Heart right ventricle (tissue), 16 donors: ENCODE measurements at regions of chr10 and their contacts with region 1.

Region 1: DNA sequence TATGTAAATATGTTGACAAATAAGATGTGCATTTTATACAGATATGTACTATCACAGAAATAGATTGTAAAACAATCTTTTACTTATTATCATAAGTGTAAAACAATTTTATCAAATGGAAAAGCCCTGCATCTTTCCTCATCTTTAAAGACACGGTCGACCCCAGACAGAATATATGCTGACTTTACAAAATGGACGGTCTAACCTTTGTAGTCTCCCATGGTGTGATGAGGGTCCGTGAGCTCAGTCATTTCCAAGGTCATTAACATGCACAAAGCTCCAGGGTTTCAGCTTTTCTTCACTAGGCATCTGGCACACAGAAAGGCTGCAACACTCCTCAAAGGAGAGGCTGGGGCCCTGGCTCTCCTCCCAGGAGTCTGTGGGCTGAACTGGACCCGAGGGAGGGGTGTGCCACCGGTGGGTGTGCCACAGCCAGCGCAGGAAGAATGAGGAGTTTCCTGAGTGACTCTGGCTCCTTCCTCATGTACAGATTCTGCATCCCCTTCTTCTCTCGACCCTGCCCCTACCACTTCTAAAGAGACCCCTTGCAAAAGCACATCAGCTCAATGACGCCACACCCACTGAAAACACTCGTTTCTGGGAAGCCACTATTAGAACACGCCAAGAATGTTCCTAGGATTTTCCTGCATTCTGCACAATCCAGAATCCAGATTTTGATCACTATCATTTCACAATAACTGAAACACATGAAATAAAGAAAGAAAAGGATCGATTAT is 26.2 kb upstream of the ABLIM1 start:
- DNase-seq: peak; percentile 49 to 63
- ATAC-seq: peak; percentile 54 to 79 (median 66)
- H3K4me3 ChIP-seq: peak overlapping the region; percentile 15 to 62 (median 54)
- H3K27ac ChIP-seq: peak overlapping the region; percentile 75 to 95 (median 87)
- H3K4me1 ChIP-seq: peaks cover 19 to 92% (median 60%) of the 10 kb centered on the region in 9 donors
- H3K27me3 ChIP-seq: no peaks in the 10 kb centered on the region
- CTCF ChIP-seq: no peak

Region 2: GRCh38 chr10:114603948-114604347 is 80.3 kb before region 1 on chr10:
- intact Hi-C with region 1: loop called in 1 of 10 experiments (anchors 2 kb)
- DNase-seq: no peak
- ATAC-seq: peak; percentile 36 to 84 (median 74)
- H3K4me3 ChIP-seq: no peak overlapping the region
- H3K27ac ChIP-seq: peak overlapping the region; percentile 37 to 87 (median 64)
- H3K4me1 ChIP-seq: peaks cover 18 to 90% (median 70%) of the 10 kb centered on the region in 9 donors
- H3K27me3 ChIP-seq: no peaks in the 10 kb centered on the region
- CTCF ChIP-seq: no peak

Region 3: DNA sequence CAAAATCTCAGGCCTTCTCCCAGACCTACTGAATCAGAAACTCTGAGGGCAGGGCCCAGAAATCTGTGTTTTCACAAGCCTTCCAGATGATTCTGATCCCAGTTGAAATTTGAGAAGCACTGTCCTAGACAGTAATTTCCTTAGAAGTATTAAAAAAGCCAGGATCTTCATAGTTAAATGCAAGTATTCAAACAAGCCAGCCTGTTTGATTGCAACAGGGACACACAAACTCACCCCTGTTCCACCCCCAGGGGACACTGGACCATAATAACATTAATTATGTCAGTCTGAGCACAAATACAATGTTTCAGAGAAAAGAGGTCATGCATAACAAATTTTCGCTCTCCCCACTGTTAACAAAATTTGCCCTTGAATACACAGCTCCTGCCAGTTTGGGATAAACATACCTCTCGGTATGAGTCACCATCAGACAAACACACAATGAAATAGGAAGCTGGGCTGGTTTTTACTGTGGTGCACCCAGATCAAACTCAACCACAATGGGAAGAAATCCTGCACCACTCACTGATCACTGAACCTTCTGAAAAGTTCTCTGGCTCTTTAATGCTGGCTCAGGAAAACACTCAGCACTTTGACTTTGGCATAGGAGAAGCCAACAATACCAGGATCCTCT is 60.5 kb before region 1 on chr10:
- intact Hi-C with region 1: loop called in 1 of 10 experiments (anchors 5 kb)
- DNase-seq: no peak
- ATAC-seq: peak in 7 of 8 donors; percentile 45 to 77 (median 52)
- H3K4me3 ChIP-seq: no peak overlapping the region
- H3K27ac ChIP-seq: peak overlapping the region in 9 of 10 donors; percentile 31 to 95 (median 60)
- H3K4me1 ChIP-seq: peaks cover 27 to 99% (median 69%) of the 10 kb centered on the region in 9 donors
- H3K27me3 ChIP-seq: no peaks in the 10 kb centered on the region
- CTCF ChIP-seq: no peak

Region 4: DNA sequence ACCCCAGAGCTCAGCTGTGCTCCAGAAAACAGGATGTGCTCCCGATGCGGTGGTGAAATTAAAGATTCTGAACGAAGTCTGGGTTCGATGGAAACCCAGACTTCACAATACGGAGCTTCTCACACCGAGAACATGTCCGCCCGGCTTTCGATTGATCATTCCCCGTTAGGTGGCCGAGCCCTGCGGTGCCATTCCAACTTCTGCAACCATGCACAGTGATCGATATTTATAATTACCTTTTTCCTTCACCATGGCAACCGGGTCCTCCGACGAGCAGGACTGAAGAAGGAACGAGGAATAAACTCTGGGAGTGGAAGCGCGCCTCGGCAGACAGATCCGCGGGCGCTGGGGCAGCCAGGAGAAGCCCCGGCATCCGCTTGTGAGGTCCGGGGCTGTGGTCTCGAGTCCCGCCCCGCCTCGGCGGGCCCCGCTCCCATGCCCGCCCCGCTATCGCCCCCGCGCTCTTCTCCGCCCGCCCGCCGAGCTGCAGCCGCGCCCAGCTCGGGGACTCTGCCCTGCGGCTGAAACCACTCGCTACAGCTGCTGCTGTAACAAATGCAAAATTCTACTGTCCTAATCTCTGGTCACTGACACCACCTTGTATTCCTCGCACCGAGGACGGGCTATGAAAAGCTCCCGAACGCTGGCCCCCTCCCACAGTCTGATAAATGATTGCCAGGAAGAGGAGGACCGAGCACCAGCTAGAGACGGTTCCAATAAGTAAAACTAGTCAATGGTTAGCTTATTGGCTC is 52.4 kb before region 1 on chr10:
- intact Hi-C with region 1: loop called in 5 of 10 experiments (anchors 5 to 10 kb)
- DNase-seq: peak; percentile 57 to 58
- ATAC-seq: peak; percentile 58 to 69 (median 61)
- H3K4me3 ChIP-seq: peak overlapping the region; percentile 45 to 80 (median 62)
- H3K27ac ChIP-seq: peak overlapping the region; percentile 81 to 95 (median 86)
- H3K4me1 ChIP-seq: peaks cover 8 to 93% (median 62%) of the 10 kb centered on the region in 9 donors
- H3K27me3 ChIP-seq: peaks cover 0 to 37% (median 0%) of the 10 kb centered on the region in 7 donors
- CTCF ChIP-seq: peak in 1 of 9 donors; percentile 13

Region 5: GRCh38 chr10:114653926-114654325 is 30.3 kb before region 1 on chr10:
- intact Hi-C with region 1: loop called in 2 of 10 experiments (anchors 2 to 5 kb)
- DNase-seq: peak; percentile 45 to 69
- ATAC-seq: peak; percentile 62 to 81 (median 74)
- H3K4me3 ChIP-seq: no peak overlapping the region
- H3K27ac ChIP-seq: peak overlapping the region; percentile 8 to 92 (median 78)
- H3K4me1 ChIP-seq: peaks cover 41 to 99% (median 90%) of the 10 kb centered on the region in 9 donors
- H3K27me3 ChIP-seq: no peaks in the 10 kb centered on the region
- CTCF ChIP-seq: peak in 2 of 9 donors; percentile 34 to 43

Region 6: DNA sequence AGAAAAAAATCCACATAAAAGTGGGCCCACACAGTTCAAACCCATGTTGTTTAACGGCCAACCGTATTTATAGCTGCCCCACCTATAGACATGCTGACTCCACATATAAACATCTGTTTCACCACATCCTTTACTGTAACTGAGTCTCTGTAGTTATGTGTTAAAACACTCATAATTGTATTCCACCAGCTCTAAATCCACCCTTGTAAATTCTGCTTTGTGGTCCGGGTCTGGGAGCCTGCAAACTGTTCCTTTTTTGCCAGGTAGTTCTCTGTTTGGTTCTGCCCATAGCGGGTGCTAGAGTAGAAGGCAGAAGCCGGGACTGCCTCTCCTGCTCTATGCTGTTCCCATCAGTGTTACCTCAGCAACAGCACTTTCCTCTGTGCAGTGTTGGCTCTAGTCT is 117.2 kb after region 1 on chr10:
- intact Hi-C with region 1: no loop called
- DNase-seq: no peak
- ATAC-seq: peak in 6 of 8 donors; percentile 47 to 86 (median 70)
- H3K4me3 ChIP-seq: no peak overlapping the region
- H3K27ac ChIP-seq: no peak overlapping the region
- H3K4me1 ChIP-seq: peaks cover 0 to 7% (median 0%) of the 10 kb centered on the region in 9 donors
- H3K27me3 ChIP-seq: no peaks in the 10 kb centered on the region
- CTCF ChIP-seq: peak in 1 of 9 donors; percentile 3

Region 7: DNA sequence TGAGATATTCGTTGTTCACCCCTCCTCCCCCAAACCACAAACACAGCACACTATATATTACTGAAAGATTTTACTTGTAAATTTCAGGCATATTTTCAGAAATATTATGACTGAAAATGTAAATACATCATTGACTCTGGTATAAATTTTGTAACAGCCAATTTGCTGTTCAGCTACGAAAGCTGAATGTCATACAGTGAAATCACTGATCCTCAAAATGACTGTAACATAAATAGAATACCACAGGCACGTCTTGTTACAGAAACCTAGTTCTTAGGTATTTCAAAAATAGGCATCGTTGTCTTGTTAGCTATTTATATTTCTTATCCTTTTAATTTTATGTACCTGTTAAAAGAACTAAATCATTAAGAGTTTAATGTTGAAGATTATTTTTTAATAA is 268.8 kb after region 1 on chr10:
- intact Hi-C with region 1: no loop called
- DNase-seq: no peak
- ATAC-seq: no peak
- H3K4me3 ChIP-seq: no peak overlapping the region
- H3K27ac ChIP-seq: no peak overlapping the region
- H3K4me1 ChIP-seq: peaks cover 0 to 42% (median 8%) of the 10 kb centered on the region in 9 donors
- H3K27me3 ChIP-seq: no peaks in the 10 kb centered on the region
- CTCF ChIP-seq: no peak